HEK293T (cell line): ENCODE measurements at regions of chr12 and their contacts with region 1.

Region 1: GRCh38 chr12:53675651-53676453 is at the start of gene ATP5MC2:
- DNase-seq: peak; percentile 97

Region 2: GRCh38 chr12:53414756-53415417 is 261.0 kb before region 1 on chr12:
- CTCF ChIA-PET with region 1: no interaction called
- POLR2A ChIA-PET with region 1: no interaction called
- DNase-seq: no peak

Region 3: DNA sequence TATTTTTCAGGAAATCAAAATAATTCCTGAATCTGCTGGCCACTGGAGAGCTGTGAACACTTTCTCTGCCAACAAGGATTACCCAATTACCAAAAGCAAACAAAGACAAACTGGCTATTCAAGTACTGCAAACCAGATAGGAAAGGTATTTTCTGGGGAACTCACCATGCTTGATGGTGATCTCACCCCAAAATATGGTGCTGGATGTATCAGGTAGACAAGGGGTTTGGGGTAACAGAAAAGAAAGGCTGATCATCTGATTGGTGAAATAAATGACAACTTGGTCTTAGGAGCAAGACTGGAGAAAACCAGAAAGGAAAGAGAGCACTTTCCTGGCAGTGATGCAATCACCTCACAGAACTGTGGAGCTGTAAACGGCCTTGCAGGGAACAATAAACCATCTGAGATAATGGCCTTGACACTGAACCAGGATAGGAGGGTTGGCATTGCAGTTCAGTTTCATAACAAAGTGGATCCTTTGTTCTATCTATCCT is 137.6 kb before region 1 on chr12:
- CTCF ChIA-PET with region 1: interaction called, 9 read pairs
- POLR2A ChIA-PET with region 1: interaction called, 15 read pairs
- DNase-seq: no peak

Region 4: GRCh38 chr12:53625946-53626701 is 49.7 kb before region 1 on chr12 and contains the start of gene ATF7:
- CTCF ChIA-PET with region 1: no interaction called
- POLR2A ChIA-PET with region 1: interaction called, 71 read pairs
- DNase-seq: peak; percentile 96

Region 5: DNA sequence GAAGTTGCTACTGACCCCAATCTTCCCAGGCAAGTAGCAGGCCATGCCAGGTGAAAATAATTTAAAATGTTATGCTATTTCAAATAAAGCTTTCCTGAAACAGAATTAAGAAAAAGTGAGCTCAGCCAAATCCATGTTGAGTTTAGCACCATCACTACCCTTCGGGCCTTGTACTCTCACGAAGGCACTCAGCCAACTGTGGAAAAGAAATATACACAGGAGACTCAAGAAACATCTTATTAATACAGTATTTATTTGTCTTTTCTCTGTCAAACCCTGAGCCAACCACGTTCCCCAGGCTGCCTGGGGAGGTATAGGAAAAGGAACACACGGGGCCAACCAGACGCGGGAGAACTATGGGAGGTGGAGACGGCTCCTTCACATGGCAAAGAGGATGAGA is 10.9 kb before region 1 on chr12:
- CTCF ChIA-PET with region 1: interaction called, 3 read pairs
- POLR2A ChIA-PET with region 1: interaction called, 26 read pairs
- DNase-seq: no peak

Region 6: DNA sequence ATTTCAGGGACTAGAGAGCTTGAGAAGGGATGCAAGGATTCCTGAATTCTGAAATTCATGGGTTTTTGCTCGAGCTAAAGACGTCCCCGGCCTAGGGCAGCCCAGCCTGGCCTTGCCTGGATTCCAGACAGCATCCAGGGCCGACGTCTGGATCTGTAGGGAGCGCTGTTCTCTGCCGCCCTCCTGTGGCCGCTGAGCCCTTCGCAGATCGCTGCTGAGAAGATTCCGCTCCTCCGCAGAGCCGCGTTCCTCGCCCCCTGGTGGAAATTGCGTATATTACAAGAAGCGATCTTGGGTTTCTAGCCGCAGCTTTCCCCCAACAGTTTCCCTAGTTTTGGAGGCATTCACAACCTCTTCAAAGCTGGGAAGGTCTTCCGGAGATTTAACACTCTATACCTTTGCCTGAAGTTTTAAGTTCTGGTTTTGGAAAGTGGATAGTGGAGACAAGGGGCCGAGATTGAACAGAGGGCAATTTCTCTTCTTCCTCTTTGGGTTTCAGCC is 70.8 kb after region 1 on chr12:
- CTCF ChIA-PET with region 1: interaction called, 4 read pairs
- POLR2A ChIA-PET with region 1: interaction called, 10 read pairs
- DNase-seq: peak; percentile 90